Posterior vena cava (tissue), 2 donors: ENCODE measurements at regions of chr12 and their contacts with region 1.

Region 1: GRCh38 chr12:123106628-123107359 is 44.1 kb downstream of the PITPNM2 start:
- DNase-seq: no peak

Region 2: GRCh38 chr12:123049398-123050240 is 57.2 kb before region 1 on chr12:
- intact Hi-C with region 1: loop called in 1 of 2 experiments (anchors 5 kb)
- DNase-seq: no peak

Region 3: GRCh38 chr12:123061341-123062205 is 45.2 kb before region 1 on chr12:
- intact Hi-C with region 1: loop called in 1 of 2 experiments (anchors 2 kb)
- DNase-seq: no peak

Region 4: DNA sequence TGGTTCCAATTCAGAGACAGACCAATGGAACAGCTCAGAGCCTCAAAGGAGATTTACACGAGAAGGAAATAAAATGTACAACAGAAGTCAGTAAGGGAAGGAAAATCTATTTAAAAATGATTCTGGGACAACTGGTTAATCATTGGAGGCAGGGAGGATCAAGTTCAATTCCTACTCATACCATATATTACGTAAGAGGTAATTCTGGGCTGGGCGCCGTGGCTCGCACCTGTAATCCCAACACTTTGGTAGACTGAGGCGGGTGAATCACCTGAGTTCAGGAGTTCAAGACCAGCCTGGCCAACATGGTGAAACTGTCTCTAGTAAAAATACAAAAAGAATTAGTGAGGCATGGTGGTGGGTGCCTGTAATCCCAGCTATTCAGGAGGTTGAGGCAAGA is 80.8 kb after region 1 on chr12:
- intact Hi-C with region 1: no loop called
- DNase-seq: no peak

Region 5: GRCh38 chr12:123388177-123388947 is 281.6 kb after region 1 on chr12:
- intact Hi-C with region 1: no loop called
- DNase-seq: peak; percentile 91